ENCODE measurements at regions of chr22 and their contacts with region 1.

Region 1: DNA sequence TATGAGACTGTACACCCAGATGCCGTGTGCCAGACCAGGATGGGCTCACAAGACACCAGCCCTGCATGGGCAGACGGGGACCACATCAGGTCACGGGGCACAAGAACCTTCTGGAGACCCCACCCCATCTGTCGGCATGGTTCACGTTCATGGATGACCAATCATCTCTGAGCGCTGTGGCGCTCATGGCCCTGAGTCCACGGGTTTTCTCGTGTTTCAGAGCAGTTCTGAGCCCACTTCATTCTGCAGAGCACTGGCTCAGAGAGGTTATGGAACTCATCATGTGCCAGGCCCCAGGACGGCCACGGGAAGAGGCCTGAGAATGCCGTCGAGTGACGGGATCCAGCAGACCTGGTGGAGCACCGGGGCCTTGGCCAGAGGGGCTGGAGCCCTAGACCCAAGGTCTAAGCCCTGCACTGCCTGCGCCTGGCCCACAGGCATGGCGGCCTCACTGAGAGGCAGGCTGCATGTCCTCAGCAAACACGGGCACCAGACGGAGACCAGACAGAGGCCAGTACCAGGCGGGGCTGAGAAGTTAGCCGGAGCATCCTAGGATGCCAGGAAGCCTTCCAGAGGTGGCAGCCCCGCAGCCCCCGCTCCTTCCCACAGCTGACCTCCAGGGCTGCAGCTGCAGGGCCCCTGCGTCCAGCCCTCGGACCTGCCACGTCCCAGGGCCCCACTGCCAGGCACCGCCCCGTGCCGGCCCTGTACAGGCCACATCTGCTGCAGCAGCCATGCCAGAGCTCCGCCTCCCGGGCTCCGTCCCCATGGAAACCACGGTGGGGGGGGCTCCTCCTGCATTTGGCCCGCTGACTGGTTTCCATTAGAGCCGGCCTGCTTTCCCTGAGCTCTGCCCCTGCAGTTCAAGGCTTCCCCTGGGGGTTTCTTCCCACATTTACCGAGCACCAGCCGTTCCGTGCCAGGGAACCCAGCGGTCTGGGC is 62.7 kb upstream of the PPARA start:
- DNase-seq: peak; percentile 84
- H3K4me3 ChIP-seq: peak overlapping the region; percentile 49 to 95 (median 93)
- H3K27ac ChIP-seq: peak overlapping the region; percentile 94
- H3K4me1 ChIP-seq: peaks cover 88% of the 10 kb centered on the region
- H3K27me3 ChIP-seq: no peaks in the 10 kb centered on the region
- CTCF ChIP-seq: no peak

Region 2: DNA sequence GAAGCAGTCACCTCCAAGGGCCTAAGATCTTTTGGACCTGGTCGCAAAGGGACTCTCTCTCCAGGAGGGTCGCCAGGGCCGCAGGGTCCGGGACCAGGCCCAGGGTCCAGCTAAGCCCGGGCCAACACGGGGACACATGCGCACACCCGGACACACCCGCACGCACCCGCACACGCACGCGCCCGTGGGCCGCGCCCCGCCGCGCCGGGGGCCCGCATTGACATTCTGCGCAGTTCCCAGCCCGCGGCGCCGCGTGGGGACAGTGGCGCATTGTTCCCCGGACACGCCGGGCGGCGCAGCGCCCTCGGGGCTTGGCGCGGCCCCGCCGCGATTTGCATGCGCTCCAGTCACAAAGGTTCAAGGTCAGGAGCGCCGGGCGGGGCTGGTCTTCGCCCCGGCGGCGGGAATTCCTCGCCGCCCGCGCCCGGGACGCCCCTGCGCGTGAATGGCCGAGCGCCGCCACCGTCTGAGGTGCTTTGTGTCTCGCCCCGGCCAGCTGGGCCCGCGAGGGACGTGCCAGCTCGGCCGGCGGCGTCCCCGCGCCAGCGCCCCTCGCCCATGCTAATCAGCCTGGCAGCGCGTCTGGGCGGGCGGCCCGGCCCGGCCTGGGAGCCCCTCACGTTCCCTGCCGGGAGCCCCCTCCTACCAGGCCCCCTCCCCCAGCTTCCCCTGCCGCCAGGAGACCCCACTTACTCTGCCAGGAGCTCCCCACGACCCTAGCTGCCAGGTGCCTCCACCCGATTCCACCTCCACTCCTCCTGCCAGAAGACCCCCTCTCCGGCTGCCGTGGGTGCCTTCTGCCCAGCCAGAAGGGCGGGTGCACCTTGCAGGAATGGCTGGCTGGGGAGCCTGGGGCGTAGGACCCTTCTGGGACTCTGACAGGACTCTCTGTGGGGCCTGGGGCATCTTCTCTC is 60.2 kb before region 1 on chr22:
- CTCF ChIA-PET with region 1: no interaction called
- dilution Hi-C with region 1: no loop called
- in situ Hi-C with region 1: no loop called
- intact Hi-C with region 1: no loop called
- DNase-seq: no peak
- H3K4me3 ChIP-seq: peak overlapping the region in 2 of 3 experiments; percentile 31 to 43
- H3K27ac ChIP-seq: no peak overlapping the region
- H3K4me1 ChIP-seq: peaks cover 13% of the 10 kb centered on the region
- H3K27me3 ChIP-seq: no peaks in the 10 kb centered on the region
- CTCF ChIP-seq: no peak

Region 3: DNA sequence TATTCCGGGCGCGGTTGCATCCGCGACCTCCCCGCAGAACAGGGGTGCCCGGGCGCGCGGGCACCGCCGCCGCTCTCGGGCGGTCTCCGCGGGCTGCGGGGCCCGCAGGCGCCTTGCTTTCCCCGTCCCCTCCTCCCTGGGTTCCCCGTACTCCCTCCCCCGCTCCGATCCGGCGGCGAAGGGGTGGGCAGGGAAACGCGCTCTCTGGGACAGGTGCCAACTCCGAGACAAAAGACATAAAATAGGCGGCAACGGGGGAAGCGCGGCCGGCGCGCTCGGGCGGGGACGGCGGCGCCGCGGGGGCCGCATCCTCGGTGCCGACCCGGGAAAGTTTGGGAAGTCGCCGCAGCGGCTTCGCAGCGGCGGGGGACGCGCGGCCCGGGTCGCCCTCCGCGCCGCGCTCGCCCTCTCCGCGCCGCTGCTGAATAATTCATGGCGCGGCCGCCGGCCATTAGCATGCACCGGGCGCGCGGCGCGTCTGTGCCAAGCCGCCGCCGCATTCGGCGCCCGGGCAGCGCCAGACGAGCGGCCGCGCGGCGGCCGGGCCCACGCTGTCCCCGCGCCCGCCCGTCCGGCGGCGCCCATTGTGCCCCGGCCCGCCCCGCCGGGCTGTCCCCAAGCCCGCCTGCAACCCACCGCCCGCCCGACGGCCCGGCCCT is 16.0 kb before region 1 on chr22:
- CTCF ChIA-PET with region 1: no interaction called
- dilution Hi-C with region 1: no loop called
- in situ Hi-C with region 1: no loop called
- intact Hi-C with region 1: loop called (anchors 1 kb)
- DNase-seq: peak; percentile 94
- H3K4me3 ChIP-seq: peak overlapping the region; percentile 80 to 99 (median 93)
- H3K27ac ChIP-seq: peak overlapping the region; percentile 94
- H3K4me1 ChIP-seq: peaks cover 30% of the 10 kb centered on the region
- H3K27me3 ChIP-seq: no peaks in the 10 kb centered on the region
- CTCF ChIP-seq: no peak

Region 4: DNA sequence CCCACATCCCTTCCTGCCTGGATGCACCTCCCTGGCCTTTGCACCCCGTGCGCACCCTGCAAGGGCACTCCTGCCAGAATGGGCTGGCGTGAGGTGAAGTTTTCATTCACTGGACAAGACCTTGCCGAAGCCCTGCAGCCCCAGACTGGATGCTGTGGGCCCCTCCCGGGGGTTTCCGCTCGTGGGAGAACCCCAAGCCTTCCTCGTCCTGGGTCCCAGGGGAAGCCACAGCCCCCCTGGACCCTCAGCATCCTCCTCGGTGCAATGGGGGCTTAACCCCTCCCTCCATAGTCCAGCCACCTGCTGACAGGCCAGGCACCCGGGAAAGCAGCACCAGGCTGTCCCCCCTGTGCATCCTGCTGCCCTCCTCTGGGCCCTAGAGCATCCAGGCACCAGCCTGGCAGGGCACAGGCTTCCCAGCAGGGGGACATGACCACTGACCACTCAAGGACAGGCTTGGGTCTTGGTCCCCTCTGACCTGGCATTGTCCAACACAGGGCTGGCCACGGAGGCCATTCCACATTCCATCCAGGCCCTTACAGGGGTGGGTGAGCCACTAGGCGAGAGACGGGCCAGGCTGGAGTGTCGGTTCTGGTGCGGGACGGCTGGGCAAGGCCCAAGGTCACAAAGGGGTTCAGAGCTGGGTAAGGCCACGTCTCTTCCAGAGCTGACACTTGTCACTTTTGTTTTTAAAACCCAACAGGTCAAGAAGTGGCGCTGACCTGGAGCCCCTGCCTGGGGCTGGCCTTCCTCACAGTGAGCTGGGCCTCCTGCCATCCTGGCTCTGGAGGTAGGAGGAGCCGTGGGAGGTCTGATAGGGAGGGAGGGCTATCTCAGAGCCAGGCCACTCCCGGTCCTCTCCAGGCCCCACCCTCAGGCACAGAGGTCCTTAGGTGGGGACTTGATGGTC is 21.2 kb after region 1 on chr22:
- CTCF ChIA-PET with region 1: interaction called, 3 read pairs
- dilution Hi-C with region 1: no loop called
- in situ Hi-C with region 1: no loop called
- intact Hi-C with region 1: loop called (anchors 1 kb)
- DNase-seq: peak; percentile 58
- H3K4me3 ChIP-seq: no peak overlapping the region
- H3K27ac ChIP-seq: no peak overlapping the region
- H3K4me1 ChIP-seq: peaks cover 87% of the 10 kb centered on the region
- H3K27me3 ChIP-seq: no peaks in the 10 kb centered on the region
- CTCF ChIP-seq: peak in 1 of 2 donors; percentile 8

Region 5: GRCh38 chr22:46116491-46116958 is 28.9 kb after region 1 on chr22:
- CTCF ChIA-PET with region 1: no interaction called
- dilution Hi-C with region 1: no loop called
- in situ Hi-C with region 1: no loop called
- intact Hi-C with region 1: loop called (anchors 1 kb)
- DNase-seq: peak; percentile 63
- H3K4me3 ChIP-seq: no peak overlapping the region
- H3K27ac ChIP-seq: no peak overlapping the region
- H3K4me1 ChIP-seq: peaks cover 30% of the 10 kb centered on the region
- H3K27me3 ChIP-seq: no peaks in the 10 kb centered on the region
- CTCF ChIP-seq: peak; percentile 29 to 83

Measured in mammary epithelial cell (primary cell).